Activated CD8-positive, alpha-beta T cell treated with anti-CD3 and anti-CD28 coated beads, Interleukin-2, amount 10 ng/mL, durations not matched to agents 7 days and 5 days (primary cell): ENCODE measurements at regions of chr19 and their contacts with region 1.

Region 1: GRCh38 chr19:47081111-47081510 is 32.5 kb downstream of the ZC3H4 start:
- DNase-seq: no peak
- ATAC-seq: no peak
- H3K4me3 Mint-ChIP-seq: no peak overlapping the region
- H3K27ac Mint-ChIP-seq: peak overlapping the region; percentile 64
- H3K4me1 Mint-ChIP-seq: peaks cover 6% of the 10 kb centered on the region
- H3K27me3 Mint-ChIP-seq: no peaks in the 10 kb centered on the region

Region 2: DNA sequence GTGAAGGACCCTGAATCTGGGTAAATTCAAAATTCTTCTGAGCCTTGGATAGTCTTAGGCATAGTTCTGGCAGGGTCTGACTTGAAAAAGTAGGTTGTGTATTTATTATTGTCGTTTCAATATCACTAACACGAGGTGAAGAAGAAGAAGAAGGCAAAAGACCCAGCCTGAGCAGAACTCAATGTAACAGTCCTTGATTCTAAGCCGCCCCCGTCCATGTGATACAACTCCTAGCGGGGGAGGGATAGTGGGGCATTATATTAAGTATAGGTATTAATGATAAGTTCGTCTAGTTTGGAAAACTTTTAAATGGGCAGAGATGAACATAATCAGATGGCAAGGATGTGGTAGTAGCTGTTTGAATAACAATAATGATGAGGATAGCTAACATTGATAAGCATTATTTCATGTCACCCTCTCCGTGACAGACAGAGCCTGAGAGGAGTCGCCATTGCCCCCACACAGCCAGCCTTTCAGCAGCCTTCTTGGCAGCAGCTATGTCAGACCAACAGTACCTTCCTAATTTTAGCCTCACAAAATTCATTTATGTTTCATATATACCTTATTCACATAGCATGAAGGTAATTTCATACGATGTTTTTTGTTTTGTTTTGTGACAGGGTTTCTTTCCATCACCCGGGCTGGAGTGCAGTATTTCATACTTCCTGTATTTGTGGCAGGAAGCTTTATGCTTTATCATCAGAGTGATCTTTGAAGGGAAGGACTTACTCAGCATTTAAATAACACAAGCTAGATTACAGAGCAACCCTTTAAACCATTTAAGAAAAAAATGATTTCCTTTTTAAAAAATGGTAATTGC is 125.9 kb before region 1 on chr19:
- CTCF ChIA-PET with region 1: no interaction called
- POLR2A ChIA-PET with region 1: no interaction called
- DNase-seq: peak; percentile 60
- ATAC-seq: peak; percentile 83
- H3K4me3 Mint-ChIP-seq: peak overlapping the region; percentile 65
- H3K27ac Mint-ChIP-seq: peak overlapping the region; percentile 89
- H3K4me1 Mint-ChIP-seq: peaks cover 62% of the 10 kb centered on the region
- H3K27me3 Mint-ChIP-seq: no peaks in the 10 kb centered on the region

Region 3: DNA sequence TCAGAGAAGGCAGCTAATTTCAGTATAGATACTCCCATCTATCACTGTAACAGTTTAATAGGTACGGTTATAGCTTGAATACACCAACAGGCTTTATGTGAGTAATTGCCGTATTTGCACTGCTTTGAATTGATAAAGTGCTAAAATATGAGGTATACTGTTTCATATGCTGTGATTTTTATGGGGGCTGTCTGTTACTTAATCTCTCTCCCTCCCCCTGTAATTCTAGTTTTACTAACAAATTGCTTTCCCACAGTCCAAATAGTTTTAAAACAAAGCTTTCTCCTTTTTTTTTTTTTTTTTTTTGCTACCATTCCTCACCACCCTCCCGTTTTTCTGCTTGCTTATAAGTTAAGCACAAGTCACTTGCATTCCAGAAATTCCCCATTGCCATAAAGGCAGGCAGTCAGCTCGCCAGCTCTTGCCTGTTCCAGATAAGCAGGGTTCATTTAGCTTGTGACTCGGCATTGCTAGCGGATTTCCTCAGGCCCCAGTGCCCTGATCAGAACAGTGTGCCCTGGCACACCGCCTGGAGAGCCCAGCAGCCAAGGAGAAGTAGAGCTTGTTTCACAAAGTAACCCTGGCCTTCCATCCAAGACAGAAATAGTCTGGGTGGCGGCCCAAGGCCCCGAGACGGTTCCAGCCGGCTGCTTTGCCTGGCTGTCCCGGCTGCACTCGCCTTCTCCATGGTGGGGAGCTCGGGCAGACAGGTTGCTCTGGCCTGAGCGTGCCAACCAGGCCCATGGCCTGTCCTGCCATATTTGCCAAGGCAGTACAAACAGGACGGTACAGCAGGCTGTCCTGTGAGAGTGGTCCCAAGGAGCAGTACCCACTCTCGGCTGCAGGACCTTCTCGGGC is 105.0 kb before region 1 on chr19:
- CTCF ChIA-PET with region 1: no interaction called
- POLR2A ChIA-PET with region 1: no interaction called
- DNase-seq: no peak
- ATAC-seq: no peak
- H3K4me3 Mint-ChIP-seq: no peak overlapping the region
- H3K27ac Mint-ChIP-seq: no peak overlapping the region
- H3K4me1 Mint-ChIP-seq: peaks cover 33% of the 10 kb centered on the region
- H3K27me3 Mint-ChIP-seq: no peaks in the 10 kb centered on the region

Region 4: GRCh38 chr19:47094557-47095475 is 13.7 kb after region 1 on chr19:
- CTCF ChIA-PET with region 1: interaction called, 48 read pairs
- POLR2A ChIA-PET with region 1: interaction called, 3 read pairs
- DNase-seq: peak; percentile 64
- ATAC-seq: peak; percentile 82
- H3K4me3 Mint-ChIP-seq: peak overlapping the region; percentile 78
- H3K27ac Mint-ChIP-seq: peak overlapping the region; percentile 87
- H3K4me1 Mint-ChIP-seq: peaks cover 79% of the 10 kb centered on the region
- H3K27me3 Mint-ChIP-seq: no peaks in the 10 kb centered on the region

Region 5: GRCh38 chr19:47124937-47125668 is 44.0 kb after region 1 on chr19:
- CTCF ChIA-PET with region 1: interaction called, 53 read pairs
- POLR2A ChIA-PET with region 1: interaction called, 3 read pairs
- DNase-seq: peak; percentile 30
- ATAC-seq: peak; percentile 60
- H3K4me3 Mint-ChIP-seq: no peak overlapping the region
- H3K27ac Mint-ChIP-seq: no peak overlapping the region
- H3K4me1 Mint-ChIP-seq: peaks cover 13% of the 10 kb centered on the region
- H3K27me3 Mint-ChIP-seq: no peaks in the 10 kb centered on the region